Right ventricle myocardium superior (tissue), 1 donor: ENCODE measurements at regions of chr2 and their contacts with region 1.

Region 1: GRCh38 chr2:158011055-158011771 is 90.5 kb upstream of the UPP2 start:
- DNase-seq: no peak
- ATAC-seq: no peak

Region 2: DNA sequence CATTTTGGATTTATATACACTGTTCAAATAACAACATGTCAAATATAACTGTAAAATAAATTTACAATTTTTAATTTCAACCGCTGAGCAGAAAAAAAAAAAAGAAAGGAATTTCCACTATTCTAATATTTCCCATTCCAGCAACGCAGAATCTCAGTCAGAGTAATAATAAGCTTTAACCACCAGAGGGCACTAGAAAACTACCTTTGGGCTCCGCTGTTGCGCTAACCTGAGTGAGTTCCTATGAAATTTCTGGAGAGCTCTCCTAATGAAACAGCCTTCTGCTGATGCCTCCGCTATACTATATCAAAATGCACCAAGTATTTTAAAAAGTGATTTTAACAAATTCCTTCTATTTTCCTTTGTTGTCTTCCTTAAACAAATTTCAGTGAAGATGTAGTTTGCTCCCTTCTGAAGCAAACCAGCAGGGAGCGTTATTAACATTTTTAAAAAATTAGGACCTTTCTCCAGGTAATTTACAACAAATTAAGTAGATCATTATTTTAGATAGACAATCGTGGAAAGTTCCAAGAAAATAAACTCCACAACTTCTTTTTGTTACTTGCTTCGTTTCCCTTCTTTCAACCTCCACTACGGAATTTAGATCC is 708.6 kb before region 1 on chr2:
- intact Hi-C with region 1: loop called (anchors 10 kb)
- DNase-seq: no peak
- ATAC-seq: peak; percentile 83

Region 3: GRCh38 chr2:157497638-157498314 is 513.4 kb before region 1 on chr2:
- intact Hi-C with region 1: loop called (anchors 5 kb)
- DNase-seq: no peak
- ATAC-seq: peak; percentile 82

Region 4: DNA sequence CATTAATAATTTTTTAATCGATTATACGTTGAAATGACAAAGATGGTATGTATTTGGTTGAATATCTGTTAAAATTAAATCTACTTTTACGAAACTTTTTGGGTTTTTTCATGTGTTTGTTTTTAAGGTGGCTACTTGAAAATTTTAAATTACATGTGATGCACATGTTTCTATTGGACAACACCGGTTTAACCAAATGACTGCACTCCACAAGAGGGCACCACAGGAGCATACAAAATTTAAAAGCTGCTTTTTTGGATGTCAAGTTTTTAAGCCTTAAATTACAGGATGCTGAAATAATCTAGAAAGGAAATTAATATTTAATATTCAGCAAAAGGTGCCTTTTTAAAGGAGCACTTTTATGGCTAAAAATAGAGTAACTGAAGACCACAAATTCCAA is 233.8 kb before region 1 on chr2:
- intact Hi-C with region 1: loop called (anchors 2 kb)
- DNase-seq: no peak
- ATAC-seq: no peak

Region 5: DNA sequence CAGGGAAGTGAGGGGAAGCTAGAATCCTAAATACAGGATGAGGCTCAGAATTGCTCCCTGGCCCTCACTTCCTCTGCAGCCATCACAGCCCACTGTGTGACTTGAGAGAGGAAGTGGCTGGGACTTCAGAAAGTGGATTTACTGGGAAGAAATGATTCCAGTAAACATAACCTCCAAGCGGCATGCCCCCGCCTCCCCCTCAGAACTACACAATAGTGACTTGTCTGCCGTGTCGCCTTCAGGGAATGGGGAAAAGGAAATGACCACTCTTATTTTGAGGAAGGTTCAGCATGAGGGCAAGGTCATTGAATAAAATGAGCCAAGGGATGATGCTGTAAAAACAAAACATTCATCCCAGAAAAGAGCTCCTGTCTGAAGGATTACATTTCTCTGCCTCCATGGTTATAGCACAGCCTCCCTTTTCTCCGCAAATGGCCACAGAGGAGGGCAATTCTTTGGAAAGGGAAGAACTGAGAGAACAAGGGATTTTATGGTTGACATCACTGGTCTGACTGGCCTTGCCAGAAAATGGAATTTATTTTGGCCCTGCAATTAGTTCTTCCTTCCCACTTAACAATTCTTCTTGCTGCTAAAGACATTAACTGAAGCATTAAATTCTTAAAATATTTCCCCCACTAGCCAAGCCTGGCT is 705.0 kb after region 1 on chr2:
- intact Hi-C with region 1: no loop called
- DNase-seq: peak; percentile 71
- ATAC-seq: peak; percentile 65